ENCODE measurements at regions of chr5 and their contacts with region 1.

Region 1: GRCh38 chr5:76771705-76772405 is 47.0 kb upstream of the F2RL1 start:
- DNase-seq: no peak
- CTCF ChIP-seq: no peak

Region 2: GRCh38 chr5:76582230-76583162 is 189.4 kb before region 1 on chr5:
- CTCF ChIA-PET with region 1: interaction called, 17 read pairs
- POLR2A ChIA-PET with region 1: no interaction called
- DNase-seq: peak; percentile 45
- CTCF ChIP-seq: no peak

Region 3: GRCh38 chr5:76608833-76609232 is 163.0 kb before region 1 on chr5:
- CTCF ChIA-PET with region 1: interaction called, 145 read pairs
- POLR2A ChIA-PET with region 1: no interaction called
- DNase-seq: peak; percentile 36
- CTCF ChIP-seq: no peak

Region 4: GRCh38 chr5:76705574-76705973 is 66.3 kb before region 1 on chr5:
- CTCF ChIA-PET with region 1: interaction called, 10 read pairs
- POLR2A ChIA-PET with region 1: no interaction called
- DNase-seq: no peak
- CTCF ChIP-seq: no peak

Region 5: DNA sequence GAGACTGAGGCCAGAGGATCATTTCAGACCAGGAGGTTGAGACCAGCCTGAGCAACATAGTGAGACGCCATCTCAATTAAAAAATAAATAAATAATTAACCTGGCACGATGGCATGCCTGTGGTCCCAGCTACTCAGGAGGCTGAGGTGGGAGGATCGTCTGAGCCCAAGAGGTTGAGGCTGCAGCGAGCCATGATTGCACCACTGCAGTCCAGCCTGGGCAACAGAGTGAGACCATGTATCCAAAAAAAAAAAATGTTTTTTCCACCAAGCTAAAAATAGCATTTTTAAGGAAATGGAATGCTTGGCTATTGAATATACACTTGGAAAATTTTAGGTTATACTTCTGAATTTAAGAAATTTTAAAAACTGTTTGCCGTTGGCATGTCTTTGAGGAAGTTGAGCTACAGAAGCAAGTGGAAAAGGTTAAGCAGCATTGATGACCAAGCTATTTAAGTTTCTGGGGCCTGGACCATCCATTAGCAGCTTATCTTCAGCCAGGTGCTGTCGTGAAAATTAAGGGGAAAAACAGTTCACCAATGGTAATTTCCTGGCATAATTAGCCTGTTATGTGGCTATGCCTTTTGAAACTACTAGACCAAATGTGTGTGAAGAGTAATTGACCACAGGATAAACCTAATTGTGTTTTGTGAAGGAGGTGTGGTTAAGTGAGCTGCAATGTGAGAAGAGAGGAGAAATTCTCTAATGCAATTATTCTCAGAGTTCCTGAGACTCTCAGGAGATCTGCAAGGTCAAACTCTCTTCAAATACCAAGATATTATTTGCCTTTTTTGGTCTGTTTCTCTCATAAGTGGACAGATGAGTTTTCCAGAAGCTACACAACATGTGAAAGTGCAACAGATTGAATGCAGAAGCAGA is 34.9 kb before region 1 on chr5:
- CTCF ChIA-PET with region 1: interaction called, 22 read pairs
- POLR2A ChIA-PET with region 1: no interaction called
- DNase-seq: peak; percentile 33
- CTCF ChIP-seq: no peak

Region 6: DNA sequence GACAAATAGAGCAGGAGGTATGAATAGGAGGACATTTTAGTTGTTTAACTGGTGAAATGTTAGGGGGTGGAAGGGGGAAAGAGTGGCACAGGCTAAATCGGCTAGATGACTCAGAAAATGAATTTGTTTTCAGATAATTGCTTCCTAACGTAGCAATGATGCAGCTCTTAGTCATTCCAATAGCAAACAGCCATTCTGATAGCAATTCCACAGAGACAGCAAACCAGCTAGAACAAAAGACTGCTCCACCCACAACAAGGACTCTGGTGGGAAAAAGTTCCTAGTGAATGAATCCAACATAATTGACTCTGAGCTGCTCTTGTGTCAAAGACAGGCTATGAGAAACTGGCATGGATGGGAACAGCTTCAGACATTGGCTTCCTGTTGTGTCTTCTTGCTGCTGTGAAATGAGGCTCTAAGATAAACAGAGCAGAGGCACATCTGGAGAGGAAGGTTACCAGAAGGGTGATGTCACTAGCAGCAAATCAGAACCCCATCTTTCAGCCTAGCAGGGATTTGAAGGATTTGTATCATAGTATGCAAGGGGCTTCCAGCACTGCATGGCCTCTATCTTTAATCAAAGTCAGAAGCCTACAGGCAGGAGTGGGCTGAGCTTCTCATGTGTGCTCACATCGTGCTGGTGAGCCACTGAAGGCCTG is 18.9 kb after region 1 on chr5:
- CTCF ChIA-PET with region 1: interaction called, 16 read pairs
- POLR2A ChIA-PET with region 1: no interaction called
- DNase-seq: no peak
- CTCF ChIP-seq: no peak